ENCODE measurements at regions of chr5 and their contacts with region 1.

Region 1: GRCh38 chr5:15499528-15500324 is at the start of gene FBXL7:
- DNase-seq: peak; percentile 88 to 94
- ATAC-seq: peak; percentile 90
- H3K4me3 ChIP-seq: peak within 1 kb of the TSS; percentile 89 to 98
- H3K27ac ChIP-seq: peak within 1 kb of the TSS; percentile 46 to 60
- H3K4me1 ChIP-seq: peaks cover 1 to 4% of the 10 kb centered on the region in 2 donors
- H3K27me3 ChIP-seq: no peaks in the 10 kb centered on the region
- total RNA-seq, gene FBXL7: 19.9 to 32.7 TPM

Region 2: GRCh38 chr5:15105796-15106393 is 393.8 kb before region 1 on chr5:
- intact Hi-C with region 1: loop called in 1 of 2 experiments (anchors 10 kb)
- DNase-seq: no peak
- ATAC-seq: peak; percentile 79
- H3K4me3 ChIP-seq: no peak overlapping the region
- H3K27ac ChIP-seq: no peak overlapping the region
- H3K4me1 ChIP-seq: no peaks in the 10 kb centered on the region
- H3K27me3 ChIP-seq: no peaks in the 10 kb centered on the region

Region 3: GRCh38 chr5:15558240-15558639 is 58.5 kb after region 1 on chr5:
- intact Hi-C with region 1: no loop called
- DNase-seq: no peak
- ATAC-seq: no peak
- H3K4me3 ChIP-seq: no peak overlapping the region
- H3K27ac ChIP-seq: no peak overlapping the region
- H3K4me1 ChIP-seq: peaks cover 0 to 2% of the 10 kb centered on the region in 2 donors
- H3K27me3 ChIP-seq: no peaks in the 10 kb centered on the region

Region 4: GRCh38 chr5:15634591-15635288 is 135.0 kb after region 1 on chr5:
- intact Hi-C with region 1: loop called in 1 of 2 experiments (anchors 10 kb)
- DNase-seq: no peak
- ATAC-seq: peak; percentile 44
- H3K4me3 ChIP-seq: no peak overlapping the region
- H3K27ac ChIP-seq: peak overlapping the region in 1 of 2 donors; percentile 76
- H3K4me1 ChIP-seq: peaks cover 5 to 8% of the 10 kb centered on the region in 2 donors
- H3K27me3 ChIP-seq: no peaks in the 10 kb centered on the region

Region 5: DNA sequence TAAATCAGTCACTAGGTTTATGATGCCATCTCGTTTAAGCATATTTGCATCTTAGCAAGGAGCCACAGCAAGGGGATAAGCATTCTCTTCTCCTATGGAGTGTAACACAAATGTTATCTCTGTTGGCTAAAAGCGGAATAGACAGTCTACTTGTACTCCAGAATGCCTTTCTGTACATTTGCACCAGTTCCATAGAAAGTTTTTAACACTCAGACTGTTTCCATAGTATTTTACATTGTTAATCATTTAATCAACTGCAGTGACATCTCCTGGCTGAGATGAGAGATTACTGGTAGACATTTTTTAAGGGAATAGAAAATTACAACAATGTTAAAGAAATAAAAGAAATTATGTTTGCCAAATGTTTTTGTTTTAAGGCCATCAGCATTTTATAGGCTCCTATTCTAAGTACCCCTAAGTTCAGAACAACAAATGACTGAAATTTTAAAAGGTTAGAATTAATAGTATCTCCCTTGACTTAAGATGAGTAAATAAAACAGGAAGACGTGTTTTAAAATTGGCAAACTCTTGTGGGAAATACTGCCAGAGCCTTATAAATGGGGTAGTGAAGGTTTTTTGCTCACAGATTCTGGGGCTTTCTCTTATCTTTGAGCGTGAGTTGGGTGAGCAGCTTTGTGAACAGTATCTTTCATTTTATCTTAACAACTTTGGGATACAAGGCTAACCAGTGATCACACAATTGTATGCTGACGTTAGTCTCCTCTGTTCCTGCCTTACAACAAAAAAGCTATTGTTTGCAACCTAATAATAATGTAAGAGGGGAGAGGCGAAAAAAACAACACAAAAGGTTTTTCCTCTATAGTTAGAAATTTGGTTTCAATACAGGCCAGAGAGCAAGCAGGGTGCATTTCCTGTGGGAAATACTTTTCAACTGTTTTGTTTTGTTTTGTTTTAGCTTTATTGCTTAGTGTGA is 294.6 kb after region 1 on chr5:
- intact Hi-C with region 1: loop called in 1 of 2 experiments (anchors 5 kb)
- DNase-seq: no peak
- ATAC-seq: no peak
- H3K4me3 ChIP-seq: no peak overlapping the region
- H3K27ac ChIP-seq: no peak overlapping the region
- H3K4me1 ChIP-seq: peaks cover 0 to 4% of the 10 kb centered on the region in 2 donors
- H3K27me3 ChIP-seq: no peaks in the 10 kb centered on the region

Region 6: GRCh38 chr5:15821506-15821905 is 321.8 kb after region 1 on chr5:
- intact Hi-C with region 1: loop called in 1 of 2 experiments (anchors 5 kb)
- DNase-seq: no peak
- ATAC-seq: no peak
- H3K4me3 ChIP-seq: no peak overlapping the region
- H3K27ac ChIP-seq: no peak overlapping the region
- H3K4me1 ChIP-seq: peaks cover 0 to 5% of the 10 kb centered on the region in 2 donors
- H3K27me3 ChIP-seq: no peaks in the 10 kb centered on the region